Natural killer cell (primary cell): ENCODE measurements at regions of chr20 and their contacts with region 1.

Region 1: GRCh38 chr20:12925214-12925755 is 83.5 kb upstream of the SPTLC3 start:
- DNase-seq: peak; percentile 22 to 58
- ATAC-seq: peak; percentile 70 to 81 (median 79)
- H3K4me3 ChIP-seq: no peak overlapping the region
- H3K4me3 Mint-ChIP-seq: peak overlapping the region; percentile 53
- H3K27ac ChIP-seq: no peak overlapping the region
- H3K27ac Mint-ChIP-seq: no peak overlapping the region
- H3K4me1 ChIP-seq: peaks cover 27% of the 10 kb centered on the region
- H3K4me1 Mint-ChIP-seq: peaks cover 36 to 38% of the 10 kb centered on the region in 2 donors
- H3K27me3 ChIP-seq: no peaks in the 10 kb centered on the region
- H3K27me3 Mint-ChIP-seq: no peaks in the 10 kb centered on the region
- CTCF ChIP-seq: peak; percentile 91

Region 2: GRCh38 chr20:12847872-12848271 is 77.4 kb before region 1 on chr20:
- intact Hi-C with region 1: no loop called
- DNase-seq: no peak
- ATAC-seq: no peak
- H3K4me3 ChIP-seq: no peak overlapping the region
- H3K4me3 Mint-ChIP-seq: no peak overlapping the region
- H3K27ac ChIP-seq: no peak overlapping the region
- H3K27ac Mint-ChIP-seq: no peak overlapping the region
- H3K4me1 ChIP-seq: no peaks in the 10 kb centered on the region
- H3K4me1 Mint-ChIP-seq: no peaks in the 10 kb centered on the region
- H3K27me3 ChIP-seq: no peaks in the 10 kb centered on the region
- H3K27me3 Mint-ChIP-seq: peaks cover 3 to 24% of the 10 kb centered on the region in 2 donors
- CTCF ChIP-seq: no peak

Region 3: DNA sequence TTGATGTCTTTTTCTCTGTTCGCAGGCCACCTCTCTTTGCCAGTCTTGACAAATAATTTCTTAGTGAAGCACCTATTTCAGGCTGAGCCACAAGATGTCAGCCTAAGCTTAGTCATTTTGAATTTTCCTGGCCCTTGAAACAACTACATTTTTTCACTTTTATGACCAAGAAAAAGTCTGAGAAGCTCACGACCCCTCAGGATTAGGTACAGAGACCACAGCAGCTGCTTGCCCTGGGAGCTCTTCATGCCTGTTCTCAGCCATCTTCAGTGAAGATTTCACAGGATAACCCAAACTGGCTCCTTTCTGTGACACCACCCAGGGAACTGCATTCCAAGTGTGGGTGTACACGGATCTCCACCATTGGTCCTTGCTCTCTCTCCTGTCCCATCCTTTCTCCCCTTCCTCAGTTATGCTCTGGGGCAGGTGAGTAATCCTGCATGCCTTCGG is 45.1 kb after region 1 on chr20:
- intact Hi-C with region 1: loop called (anchors 1 kb)
- DNase-seq: peak in 1 of 2 donors; percentile 39
- ATAC-seq: no peak
- H3K4me3 ChIP-seq: no peak overlapping the region
- H3K4me3 Mint-ChIP-seq: no peak overlapping the region
- H3K27ac ChIP-seq: no peak overlapping the region
- H3K27ac Mint-ChIP-seq: no peak overlapping the region
- H3K4me1 ChIP-seq: peaks cover 3% of the 10 kb centered on the region
- H3K4me1 Mint-ChIP-seq: peaks cover 13 to 19% of the 10 kb centered on the region in 2 donors
- H3K27me3 ChIP-seq: no peaks in the 10 kb centered on the region
- H3K27me3 Mint-ChIP-seq: no peaks in the 10 kb centered on the region
- CTCF ChIP-seq: no peak

Region 4: GRCh38 chr20:13105864-13106457 is 180.7 kb after region 1 on chr20:
- intact Hi-C with region 1: loop called (anchors 1 kb)
- DNase-seq: peak in 1 of 2 donors; percentile 37
- ATAC-seq: no peak
- H3K4me3 ChIP-seq: no peak overlapping the region
- H3K4me3 Mint-ChIP-seq: no peak overlapping the region
- H3K27ac ChIP-seq: no peak overlapping the region
- H3K27ac Mint-ChIP-seq: no peak overlapping the region
- H3K4me1 ChIP-seq: no peaks in the 10 kb centered on the region
- H3K4me1 Mint-ChIP-seq: no peaks in the 10 kb centered on the region
- H3K27me3 ChIP-seq: no peaks in the 10 kb centered on the region
- H3K27me3 Mint-ChIP-seq: no peaks in the 10 kb centered on the region
- CTCF ChIP-seq: peak; percentile 76

Region 5: DNA sequence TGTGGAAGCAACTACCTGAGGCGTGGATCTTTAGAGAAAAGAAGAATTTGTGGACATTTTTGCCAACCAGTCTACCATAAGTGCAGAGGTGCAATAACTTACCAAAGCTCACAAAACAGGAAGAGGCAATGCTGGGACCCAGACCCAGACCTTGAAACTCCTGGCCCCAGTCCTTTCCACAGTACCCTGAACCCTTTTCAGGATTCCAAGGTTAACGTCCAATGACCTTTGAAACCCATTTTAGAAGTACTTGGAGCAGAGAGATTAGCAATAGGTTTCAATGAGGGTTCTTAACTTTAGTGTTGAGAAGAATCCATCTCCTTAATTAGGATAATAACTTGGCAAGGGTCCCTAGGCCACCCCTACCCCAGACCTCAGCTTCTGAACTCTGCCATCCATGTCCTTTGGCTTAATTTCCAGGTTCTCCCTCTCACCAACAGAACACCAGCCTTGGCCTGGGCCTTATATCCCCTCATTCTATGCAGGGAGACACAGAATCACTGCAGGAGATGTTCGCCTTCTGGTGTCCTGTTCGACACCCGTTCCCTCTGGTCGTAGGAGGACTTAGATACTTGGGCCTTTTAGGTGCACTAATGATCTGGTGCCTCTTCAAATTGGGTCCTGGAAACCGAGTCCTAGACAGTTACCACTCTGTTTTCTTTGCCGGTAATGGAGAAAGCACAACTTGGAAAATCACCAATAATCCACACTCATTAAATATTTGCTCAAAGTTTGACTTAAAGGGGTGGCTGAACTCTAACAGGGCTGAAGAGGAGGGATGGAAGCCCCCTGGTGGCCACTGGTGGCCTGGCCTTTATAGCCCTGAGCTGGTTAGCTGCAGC is 336.4 kb after region 1 on chr20:
- intact Hi-C with region 1: loop called (anchors 1 kb)
- DNase-seq: peak; percentile 37 to 81
- ATAC-seq: peak; percentile 49 to 85 (median 66)
- H3K4me3 ChIP-seq: no peak overlapping the region
- H3K4me3 Mint-ChIP-seq: no peak overlapping the region
- H3K27ac ChIP-seq: no peak overlapping the region
- H3K27ac Mint-ChIP-seq: no peak overlapping the region
- H3K4me1 ChIP-seq: no peaks in the 10 kb centered on the region
- H3K4me1 Mint-ChIP-seq: no peaks in the 10 kb centered on the region
- H3K27me3 ChIP-seq: no peaks in the 10 kb centered on the region
- H3K27me3 Mint-ChIP-seq: no peaks in the 10 kb centered on the region
- CTCF ChIP-seq: peak; percentile 68

Region 6: GRCh38 chr20:13302647-13303450 is 377.6 kb after region 1 on chr20:
- intact Hi-C with region 1: loop called (anchors 1 kb)
- DNase-seq: peak in 1 of 2 donors; percentile 55
- ATAC-seq: peak in 2 of 3 donors; percentile 42 to 71
- H3K4me3 ChIP-seq: no peak overlapping the region
- H3K4me3 Mint-ChIP-seq: no peak overlapping the region
- H3K27ac ChIP-seq: no peak overlapping the region
- H3K27ac Mint-ChIP-seq: no peak overlapping the region
- H3K4me1 ChIP-seq: no peaks in the 10 kb centered on the region
- H3K4me1 Mint-ChIP-seq: no peaks in the 10 kb centered on the region
- H3K27me3 ChIP-seq: no peaks in the 10 kb centered on the region
- H3K27me3 Mint-ChIP-seq: peaks cover 0 to 11% of the 10 kb centered on the region in 2 donors
- CTCF ChIP-seq: peak; percentile 31

Region 7: GRCh38 chr20:13546497-13547131 is 621.3 kb after region 1 on chr20:
- intact Hi-C with region 1: loop called (anchors 5 kb)
- DNase-seq: peak; percentile 52 to 74
- ATAC-seq: peak; percentile 36 to 69 (median 61)
- H3K4me3 ChIP-seq: no peak overlapping the region
- H3K4me3 Mint-ChIP-seq: no peak overlapping the region
- H3K27ac ChIP-seq: no peak overlapping the region
- H3K27ac Mint-ChIP-seq: no peak overlapping the region
- H3K4me1 ChIP-seq: no peaks in the 10 kb centered on the region
- H3K4me1 Mint-ChIP-seq: no peaks in the 10 kb centered on the region
- H3K27me3 ChIP-seq: no peaks in the 10 kb centered on the region
- H3K27me3 Mint-ChIP-seq: no peaks in the 10 kb centered on the region
- CTCF ChIP-seq: peak; percentile 85

Region 8: GRCh38 chr20:13784893-13785715 is 859.8 kb after region 1 on chr20 and contains the starts of genes ESF1 and NDUFAF5:
- intact Hi-C with region 1: loop called (anchors 10 kb)
- DNase-seq: peak; percentile 85 to 96
- ATAC-seq: peak; percentile 96 to 99 (median 98)
- H3K4me3 ChIP-seq: peak within 1 kb of the TSS; percentile 87
- H3K4me3 Mint-ChIP-seq: peak within 1 kb of the TSS; percentile 97
- H3K27ac ChIP-seq: peak within 1 kb of the TSS; percentile 89
- H3K27ac Mint-ChIP-seq: peak within 1 kb of the TSS; percentile 98 to 99
- H3K4me1 ChIP-seq: peaks cover 17% of the 10 kb centered on the region
- H3K4me1 Mint-ChIP-seq: peaks cover 37 to 50% of the 10 kb centered on the region in 2 donors
- H3K27me3 ChIP-seq: no peaks in the 10 kb centered on the region
- H3K27me3 Mint-ChIP-seq: no peaks in the 10 kb centered on the region
- CTCF ChIP-seq: no peak
- total RNA-seq, gene ESF1: 8.4 to 11.1 (median 10.0) TPM
- total RNA-seq, gene NDUFAF5: 63.4 to 75.9 (median 63.7) TPM